ENCODE measurements at regions of chr3 and their contacts with region 1.

Region 1: GRCh38 chr3:135728007-135728721 is 237.4 kb upstream of the PPP2R3A start:
- DNase-seq: no peak
- H3K4me3 ChIP-seq: no peak overlapping the region
- H3K27ac ChIP-seq: no peak overlapping the region
- H3K27me3 ChIP-seq: no peaks in the 10 kb centered on the region
- CTCF ChIP-seq: no peak

Region 2: DNA sequence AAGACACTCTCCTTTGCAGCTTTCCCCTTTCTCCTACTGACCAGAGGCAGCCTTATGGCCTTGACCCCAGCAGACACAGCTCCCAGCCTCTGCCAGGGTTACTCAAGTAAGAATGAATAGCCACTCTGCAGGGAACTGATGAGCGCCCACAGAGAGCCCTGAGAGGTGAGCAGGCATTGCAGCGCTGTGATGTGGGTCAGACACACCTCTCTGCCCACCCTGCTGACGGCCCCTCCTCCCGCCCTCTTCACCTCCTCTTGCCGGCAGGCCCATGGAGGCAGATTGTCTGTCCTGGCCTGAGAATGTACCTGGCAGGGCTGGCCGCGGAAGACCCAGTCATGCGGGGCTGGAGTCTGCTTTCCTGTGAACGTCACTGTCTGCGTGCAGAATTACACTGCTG is 275.3 kb before region 1 on chr3:
- intact Hi-C with region 1: loop called in 1 of 2 experiments (anchors 5 kb)
- DNase-seq: no peak
- H3K4me3 ChIP-seq: no peak overlapping the region
- H3K27ac ChIP-seq: no peak overlapping the region
- H3K27me3 ChIP-seq: peaks cover 0 to 6% (median 0%) of the 10 kb centered on the region in 45 donors
- CTCF ChIP-seq: no peak